Esophagus muscularis mucosa (tissue), 4 donors: ENCODE measurements at regions of chr5 and their contacts with region 1.

Region 1: DNA sequence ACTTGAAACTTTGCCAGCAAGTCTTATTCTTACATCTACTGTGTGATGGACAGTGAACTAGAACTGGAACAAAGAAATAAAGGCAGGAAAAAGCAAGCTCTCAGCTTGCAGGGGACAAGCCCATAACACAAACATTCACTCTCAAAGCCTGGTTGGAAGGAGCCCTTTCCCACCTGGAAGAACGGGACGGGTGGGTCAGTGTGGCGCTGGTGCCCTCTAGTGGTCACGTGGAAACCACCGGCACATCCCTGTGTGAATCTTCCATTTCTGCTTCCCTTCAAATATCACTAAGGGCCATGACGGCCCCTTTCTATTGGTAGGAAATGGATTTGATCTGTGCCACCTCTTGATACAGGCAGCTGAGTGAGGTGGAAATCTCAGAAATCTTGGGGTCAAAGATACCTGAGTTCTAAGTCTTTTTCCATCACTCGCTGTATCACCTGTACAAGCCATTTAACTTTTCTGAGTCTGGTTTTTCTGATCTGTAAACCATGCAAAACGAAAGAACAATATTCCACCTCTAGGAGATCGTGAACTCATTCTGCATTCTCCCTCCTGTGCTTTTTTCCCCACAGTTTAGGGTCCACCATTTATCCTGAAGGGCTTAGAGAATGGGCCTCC is 211.6 kb downstream of the MSX2 start:
- DNase-seq: no peak
- H3K4me3 ChIP-seq: no peak overlapping the region
- H3K27ac ChIP-seq: no peak overlapping the region
- H3K4me1 ChIP-seq: peaks cover 0 to 9% (median 4%) of the 10 kb centered on the region in 4 donors
- H3K27me3 ChIP-seq: peaks cover 0 to 12% (median 0%) of the 10 kb centered on the region in 4 donors
- CTCF ChIP-seq: peak; percentile 70 to 88 (median 85)
- EP300 ChIP-seq: no peak
- POLR2A ChIP-seq: no peak

Region 2: DNA sequence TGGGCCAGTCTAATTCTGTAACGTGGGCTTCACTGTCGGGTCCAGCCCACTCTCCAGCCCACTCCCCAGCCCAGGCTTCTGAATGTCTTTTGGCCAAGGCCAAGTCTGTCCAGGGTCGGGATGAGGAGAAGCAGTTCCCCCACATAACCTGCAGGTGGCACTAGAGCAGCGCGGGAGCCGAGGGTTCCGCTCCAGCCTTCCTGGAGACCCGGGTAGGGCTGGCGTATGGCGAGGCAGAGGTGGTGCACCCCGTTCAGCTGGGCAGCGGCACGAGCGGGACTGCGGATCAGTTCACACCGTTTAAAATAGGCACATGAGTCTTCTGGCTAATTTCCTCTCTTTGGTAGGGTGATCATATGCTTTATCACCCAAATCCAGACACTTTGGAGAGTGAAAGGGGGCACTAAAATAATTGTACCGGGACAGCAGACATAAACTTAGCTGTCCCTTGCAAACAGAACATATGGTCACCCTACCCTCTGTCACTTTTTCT is 25.7 kb before region 1 on chr5:
- intact Hi-C with region 1: loop called (anchors 1 kb)
- DNase-seq: no peak
- H3K4me3 ChIP-seq: peak overlapping the region in 3 of 4 donors; percentile 10 to 35 (median 23)
- H3K27ac ChIP-seq: no peak overlapping the region
- H3K4me1 ChIP-seq: peaks cover 0 to 5% (median 4%) of the 10 kb centered on the region in 4 donors
- H3K27me3 ChIP-seq: no peaks in the 10 kb centered on the region
- CTCF ChIP-seq: peak; percentile 68 to 96 (median 86)
- EP300 ChIP-seq: no peak
- POLR2A ChIP-seq: no peak